Right ventricle myocardium inferior (tissue), 1 donor: ENCODE measurements at regions of chrX and their contacts with region 1.

Region 1: GRCh38 chrX:48801280-48802088 is at the start of gene HDAC6:
- DNase-seq: peak; percentile 98
- ATAC-seq: peak; percentile 97
- total RNA-seq, gene HDAC6: 37.3 TPM

Region 2: GRCh38 chrX:48737213-48737938 is 64.1 kb before region 1 on chrX:
- intact Hi-C with region 1: loop called (anchors 2 kb)
- DNase-seq: peak; percentile 93
- ATAC-seq: peak; percentile 100

Region 3: GRCh38 chrX:48897621-48898306 is 96.3 kb after region 1 on chrX and contains the starts of genes PQBP1 and TIMM17B:
- intact Hi-C with region 1: loop called (anchors 2 kb)
- DNase-seq: peak; percentile 92
- ATAC-seq: peak; percentile 97
- total RNA-seq, gene PQBP1: 58.6 TPM
- total RNA-seq, gene TIMM17B: 80.5 TPM

Region 4: DNA sequence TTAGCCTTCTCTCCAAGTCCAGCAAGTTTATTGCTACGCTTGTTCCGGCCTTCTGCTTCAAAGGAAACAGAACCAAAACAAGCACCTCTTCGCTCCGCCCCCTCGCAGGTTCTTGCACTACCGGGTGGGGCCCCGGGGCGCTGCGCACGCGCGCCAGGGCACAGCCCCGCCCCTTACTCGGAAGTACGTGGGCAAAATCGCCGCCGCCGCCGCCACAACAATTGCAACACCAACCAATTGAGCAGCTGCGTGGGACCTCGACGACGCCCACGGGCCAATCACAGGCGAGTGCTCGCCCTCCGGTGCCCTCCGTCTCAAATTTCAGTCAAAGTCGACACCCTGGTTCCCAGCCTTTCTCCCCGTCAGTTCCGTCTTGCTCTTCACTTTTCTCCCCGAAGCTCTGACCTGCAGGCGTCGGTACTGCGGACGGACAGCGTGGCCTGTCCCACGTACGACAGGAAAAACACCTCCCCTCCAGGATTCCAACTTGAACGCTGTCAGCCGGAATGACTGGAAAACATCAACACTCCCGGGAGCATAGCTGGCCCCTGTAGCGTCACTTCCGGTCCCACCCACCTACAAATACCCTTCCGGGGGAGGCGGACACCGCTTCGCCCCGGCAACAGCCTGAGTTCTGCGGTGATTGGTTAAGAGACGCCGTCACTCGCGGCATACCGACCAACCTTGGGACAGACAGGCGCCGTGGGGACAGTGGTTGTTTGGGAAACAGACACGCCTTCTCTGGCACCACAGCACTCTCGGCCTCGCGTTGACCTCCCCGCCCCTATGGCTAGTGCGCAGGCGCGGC is 156.5 kb after region 1 on chrX:
- intact Hi-C with region 1: loop called (anchors 5 kb)
- DNase-seq: peak; percentile 98
- ATAC-seq: peak; percentile 96

Region 5: DNA sequence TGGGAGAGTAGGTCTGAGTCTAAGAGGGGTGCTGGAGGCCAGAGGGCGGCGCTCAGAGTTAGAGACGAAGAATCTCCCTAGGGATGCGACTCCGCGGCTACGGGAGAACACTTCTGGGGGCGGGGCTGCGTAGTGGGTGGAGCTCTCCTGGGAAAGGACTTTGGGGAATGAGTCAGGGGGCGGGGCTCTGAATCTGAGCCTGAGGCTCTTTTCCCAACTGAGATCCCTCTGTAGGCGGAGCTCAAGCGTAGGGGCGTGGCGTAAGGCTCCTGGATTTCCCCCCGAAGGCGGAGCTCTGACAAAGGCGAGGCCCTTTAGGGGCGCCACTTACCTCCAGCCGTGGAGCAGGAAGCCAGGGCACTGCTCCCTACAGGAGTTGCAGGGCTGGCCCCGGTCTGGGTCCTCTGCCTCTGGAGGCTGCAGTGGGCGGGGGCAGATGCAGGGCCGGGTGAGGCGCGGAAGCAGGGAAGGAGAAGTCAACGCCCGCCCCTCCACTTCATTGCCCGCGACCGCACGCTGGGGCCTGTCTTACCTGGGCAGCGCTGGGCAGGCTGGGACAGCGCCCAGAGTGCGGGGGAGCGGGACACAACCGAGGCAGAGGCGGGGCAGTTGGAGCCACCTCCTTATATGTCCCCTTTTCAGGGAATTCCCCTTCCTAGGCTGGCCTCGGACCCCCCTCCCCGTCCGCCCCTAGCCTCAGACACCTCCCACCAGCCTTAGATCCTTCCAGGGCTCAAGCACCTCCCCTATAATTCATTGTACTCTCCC is 383.0 kb after region 1 on chrX:
- intact Hi-C with region 1: loop called (anchors 5 kb)
- DNase-seq: peak; percentile 88
- ATAC-seq: peak; percentile 88